ENCODE measurements at regions of chr4 and their contacts with region 1.

Region 1: DNA sequence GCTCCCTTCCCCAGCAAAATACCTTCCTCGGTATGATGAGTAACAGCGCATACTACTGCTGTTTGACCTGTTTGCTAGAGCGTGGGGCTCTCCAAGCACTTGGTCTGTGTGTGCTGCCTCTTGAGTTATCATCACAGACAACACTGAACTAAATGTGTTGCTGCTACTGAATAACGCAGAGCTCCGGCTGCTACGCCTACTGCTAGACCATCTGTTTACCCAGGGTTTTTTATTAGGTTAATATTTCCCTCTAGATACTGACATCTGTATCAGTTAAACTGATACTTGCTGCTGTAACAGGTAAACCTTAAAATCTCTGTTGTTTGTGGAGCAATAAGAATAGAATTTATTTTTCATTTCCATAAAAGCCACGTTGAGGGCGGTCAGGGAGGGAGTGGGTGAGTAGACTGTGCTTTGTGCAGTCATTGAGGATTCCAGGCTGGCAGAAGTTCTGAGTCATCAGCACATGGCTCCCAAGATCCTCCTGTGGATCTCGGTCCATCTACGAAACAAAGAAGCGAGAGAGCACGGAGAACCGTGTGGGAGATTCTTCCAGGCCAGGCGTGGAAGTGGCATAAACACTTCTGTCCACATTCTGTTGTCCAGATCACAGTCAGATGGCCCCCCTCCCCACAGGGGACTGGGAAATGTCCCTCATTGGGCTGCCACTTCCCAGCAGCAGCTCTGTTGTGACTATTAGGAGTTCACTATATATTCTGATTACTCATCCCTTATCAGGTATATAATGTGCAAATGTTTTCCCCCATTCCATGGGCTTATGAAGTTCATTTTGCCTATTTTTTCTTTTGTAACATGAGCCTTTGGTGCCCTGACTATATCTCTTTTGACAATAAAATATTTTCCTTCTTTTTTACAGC is 14.1 kb downstream of the GRK4 start:
- DNase-seq: peak; percentile 37 to 48 (median 40)
- ATAC-seq: peak; percentile 54
- H3K4me3 ChIP-seq: no peak overlapping the region
- H3K27ac ChIP-seq: no peak overlapping the region; the same call in 2 of the 3 replicates
- H3K4me1 ChIP-seq: peaks cover 5 to 8% of the 10 kb centered on the region in 2 experiments; a peak in 3 of 5 replicates
- H3K27me3 ChIP-seq: peaks cover 2 to 10% of the 10 kb centered on the region in 2 experiments; a peak in 3 of 5 replicates
- CTCF ChIP-seq: no peak
- EP300 ChIP-seq: no peak
- POLR2A ChIP-seq: no peak
- RAD21 ChIP-seq: no peak

Region 2: DNA sequence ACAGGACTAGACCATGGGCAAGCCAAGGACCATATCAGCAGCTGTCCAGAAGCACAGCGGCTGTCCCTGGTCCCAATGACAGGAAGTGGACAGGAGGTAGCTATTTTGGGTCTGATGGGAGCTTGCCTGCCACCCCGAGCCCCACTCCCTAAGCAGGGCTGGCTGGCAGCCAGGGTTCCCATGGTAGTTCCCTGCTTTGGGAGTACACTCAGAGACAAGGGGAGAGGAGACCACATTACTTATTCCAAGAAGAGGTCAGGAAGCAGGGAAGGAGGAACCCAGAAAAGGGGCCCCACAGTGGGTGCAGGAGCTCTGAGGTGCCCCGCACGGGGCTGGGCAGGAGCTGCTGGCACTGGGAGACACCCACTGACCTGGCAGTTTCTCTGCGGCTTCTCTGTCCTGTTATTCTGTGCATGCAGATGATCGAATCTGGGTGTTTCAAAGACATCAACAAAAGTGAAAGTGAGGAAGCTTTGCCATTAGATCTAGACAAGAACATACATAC is 60.6 kb after region 1 on chr4:
- CTCF ChIA-PET with region 1: no interaction called
- POLR2A ChIA-PET with region 1: interaction called, 3 read pairs
- in situ Hi-C with region 1: no loop called
- intact Hi-C with region 1: loop called (anchors 1 kb)
- DNase-seq: peak in 1 of 4 experiments; percentile 24
- ATAC-seq: no peak
- H3K4me3 ChIP-seq: no peak overlapping the region
- H3K27ac ChIP-seq: no peak overlapping the region
- H3K4me1 ChIP-seq: peaks cover 0 to 29% of the 10 kb centered on the region in 2 experiments; a peak in 3 of 5 replicates
- H3K27me3 ChIP-seq: peaks cover 62 to 91% of the 10 kb centered on the region in 2 experiments
- CTCF ChIP-seq: no peak
- EP300 ChIP-seq: no peak
- POLR2A ChIP-seq: no peak
- RAD21 ChIP-seq: no peak

Region 3: GRCh38 chr4:3186609-3187008 is 209.2 kb after region 1 on chr4:
- CTCF ChIA-PET with region 1: no interaction called
- POLR2A ChIA-PET with region 1: no interaction called
- in situ Hi-C with region 1: no loop called
- intact Hi-C with region 1: no loop called
- DNase-seq: no peak
- ATAC-seq: no peak
- H3K4me3 ChIP-seq: no peak overlapping the region
- H3K27ac ChIP-seq: no peak overlapping the region
- H3K4me1 ChIP-seq: no peaks in the 10 kb centered on the region
- H3K27me3 ChIP-seq: no peaks in the 10 kb centered on the region
- CTCF ChIP-seq: no peak
- EP300 ChIP-seq: no peak
- POLR2A ChIP-seq: no peak
- RAD21 ChIP-seq: no peak